Sigmoid colon (tissue), 7 donors: ENCODE measurements at regions of chr15 and their contacts with region 1.

Region 1: DNA sequence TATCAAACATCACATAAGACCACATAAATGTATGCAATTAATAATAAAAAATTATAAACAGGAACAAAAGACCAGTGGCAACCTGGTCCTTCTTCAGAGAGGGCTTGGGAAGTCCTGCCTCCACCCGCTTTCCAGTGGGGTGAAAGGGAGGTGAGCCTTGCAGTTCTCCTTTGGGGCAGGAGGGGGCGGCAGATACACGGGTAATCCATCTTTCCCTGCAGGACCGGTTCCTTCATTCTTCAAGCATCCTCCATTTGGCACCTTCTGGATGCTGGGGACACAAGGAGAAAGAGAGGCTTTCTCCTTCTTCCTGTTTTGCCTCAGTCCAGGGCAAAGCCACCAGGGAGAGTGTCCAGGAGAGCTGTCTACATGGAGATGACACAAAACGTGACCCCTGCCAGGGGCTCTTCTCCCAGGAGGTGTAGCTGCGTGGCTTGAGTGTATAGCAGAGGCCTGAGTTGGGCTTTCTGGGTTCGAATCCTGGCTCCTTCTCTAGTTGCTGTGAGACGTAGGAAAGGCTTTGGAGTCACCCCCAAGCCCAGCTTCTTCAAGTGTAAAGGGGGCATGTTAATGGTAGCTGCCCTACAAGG is 23.2 kb downstream of the RPLP1 start:
- DNase-seq: peak; percentile 85
- H3K4me3 ChIP-seq: no peak overlapping the region
- H3K27ac ChIP-seq: no peak overlapping the region
- H3K4me1 ChIP-seq: no peaks in the 10 kb centered on the region
- H3K27me3 ChIP-seq: no peaks in the 10 kb centered on the region
- CTCF ChIP-seq: peak; percentile 70 to 91 (median 87)
- EP300 ChIP-seq: no peak
- POLR2A ChIP-seq: no peak

Region 2: GRCh38 chr15:69509131-69509530 is 33.3 kb after region 1 on chr15:
- intact Hi-C with region 1: no loop called
- DNase-seq: no peak
- H3K4me3 ChIP-seq: no peak overlapping the region
- H3K27ac ChIP-seq: no peak overlapping the region
- H3K4me1 ChIP-seq: no peaks in the 10 kb centered on the region
- H3K27me3 ChIP-seq: no peaks in the 10 kb centered on the region
- CTCF ChIP-seq: no peak
- EP300 ChIP-seq: no peak
- POLR2A ChIP-seq: no peak

Region 3: DNA sequence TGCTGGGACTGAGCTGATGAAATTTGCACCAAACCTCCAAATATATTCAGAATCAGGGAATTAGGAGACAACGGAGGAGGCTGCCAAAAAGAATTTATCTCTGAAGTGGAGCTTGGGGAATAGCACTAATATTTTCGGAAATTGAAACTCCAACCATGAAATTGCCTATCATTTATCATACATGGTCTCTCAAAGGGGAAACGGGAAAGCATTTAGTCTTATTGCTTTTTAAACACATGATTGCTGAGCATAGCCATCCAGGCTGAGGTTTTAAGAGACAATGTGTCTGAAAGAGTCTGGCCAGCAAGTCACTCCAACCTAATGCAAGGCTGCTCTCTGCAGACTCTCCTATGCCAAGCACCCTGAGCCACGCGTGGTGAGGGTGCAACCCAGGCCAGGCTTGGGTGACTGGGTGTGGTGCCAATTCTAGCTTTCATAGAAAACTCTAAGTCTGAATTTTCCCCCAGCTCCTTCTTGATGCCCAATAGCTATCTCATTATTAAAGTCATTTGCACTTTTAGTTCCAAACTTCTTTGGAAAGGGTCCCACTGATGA is 177.0 kb after region 1 on chr15:
- intact Hi-C with region 1: loop called (anchors 5 kb)
- DNase-seq: no peak
- H3K4me3 ChIP-seq: no peak overlapping the region
- H3K27ac ChIP-seq: no peak overlapping the region
- H3K4me1 ChIP-seq: peaks cover 0 to 11% (median 4%) of the 10 kb centered on the region in 4 donors
- H3K27me3 ChIP-seq: peaks cover 0 to 11% (median 0%) of the 10 kb centered on the region in 3 donors
- CTCF ChIP-seq: no peak
- EP300 ChIP-seq: no peak
- POLR2A ChIP-seq: no peak

Region 4: GRCh38 chr15:70488002-70488605 is 1012.2 kb after region 1 on chr15:
- intact Hi-C with region 1: loop called (anchors 2 kb)
- DNase-seq: peak; percentile 82
- H3K4me3 ChIP-seq: no peak overlapping the region
- H3K27ac ChIP-seq: no peak overlapping the region
- H3K4me1 ChIP-seq: no peaks in the 10 kb centered on the region
- H3K27me3 ChIP-seq: no peaks in the 10 kb centered on the region
- CTCF ChIP-seq: peak; percentile 89 to 97 (median 95)
- EP300 ChIP-seq: no peak
- POLR2A ChIP-seq: no peak

Region 5: GRCh38 chr15:70810916-70811578 is 1335.2 kb after region 1 on chr15:
- intact Hi-C with region 1: loop called (anchors 5 kb)
- DNase-seq: no peak
- H3K4me3 ChIP-seq: no peak overlapping the region
- H3K27ac ChIP-seq: no peak overlapping the region
- H3K4me1 ChIP-seq: no peaks in the 10 kb centered on the region
- H3K27me3 ChIP-seq: no peaks in the 10 kb centered on the region
- CTCF ChIP-seq: no peak
- EP300 ChIP-seq: no peak
- POLR2A ChIP-seq: no peak